PC-9 (cell line): ENCODE measurements at regions of chr19 and their contacts with region 1.

Region 1: GRCh38 chr19:15828429-15829305 is 13.2 kb upstream of the OR10H1 start:
- DNase-seq: peak; percentile 82 to 99
- H3K4me3 ChIP-seq: peak overlapping the region; percentile 64
- H3K27ac ChIP-seq: peak overlapping the region; percentile 99
- H3K4me1 ChIP-seq: peaks cover 46% of the 10 kb centered on the region
- H3K27me3 ChIP-seq: no peaks in the 10 kb centered on the region
- CTCF ChIP-seq: no peak

Region 2: GRCh38 chr19:15640294-15640903 is 188.3 kb before region 1 on chr19 and contains the start of gene CYP4F3:
- CTCF ChIA-PET with region 1: no interaction called
- POLR2A ChIA-PET with region 1: no interaction called
- intact Hi-C with region 1: loop called (anchors 2 kb)
- DNase-seq: peak; percentile 98
- H3K4me3 ChIP-seq: peak within 1 kb of the TSS; percentile 32; the same call in 1 of the 2 replicates
- H3K27ac ChIP-seq: peak within 1 kb of the TSS; percentile 95
- H3K4me1 ChIP-seq: peaks cover 48% of the 10 kb centered on the region
- H3K27me3 ChIP-seq: no peaks in the 10 kb centered on the region
- CTCF ChIP-seq: no peak
- total RNA-seq, gene CYP4F3: 57.6 and 70.7 TPM in 2 replicates

Region 3: DNA sequence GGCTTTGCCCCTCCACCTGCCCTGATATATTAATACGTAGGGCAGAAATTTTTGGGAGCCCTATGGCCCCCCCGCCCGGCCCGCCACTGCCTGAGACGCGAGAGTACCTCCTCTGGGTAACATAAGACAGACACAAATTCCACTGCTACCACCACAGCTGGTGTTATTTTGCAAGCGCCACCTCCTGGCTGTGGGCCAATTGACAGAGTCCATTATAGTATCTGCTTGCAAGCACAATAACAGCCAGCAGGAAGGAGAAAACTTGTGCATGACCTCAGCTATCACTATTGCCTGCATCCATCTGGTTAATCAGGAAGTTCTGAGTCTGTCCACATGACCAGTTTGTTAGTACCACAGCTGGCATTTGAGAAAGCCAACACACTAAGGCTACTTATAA is 126.1 kb before region 1 on chr19:
- CTCF ChIA-PET with region 1: no interaction called
- POLR2A ChIA-PET with region 1: no interaction called
- intact Hi-C with region 1: loop called (anchors 1 kb)
- DNase-seq: peak; percentile 85 to 97
- H3K4me3 ChIP-seq: no peak overlapping the region
- H3K27ac ChIP-seq: no peak overlapping the region; the same call in 1 of the 2 replicates
- H3K4me1 ChIP-seq: peaks cover 19% of the 10 kb centered on the region
- H3K27me3 ChIP-seq: peaks cover 7% of the 10 kb centered on the region; the same call in 1 of the 2 replicates
- CTCF ChIP-seq: 0 out of 2 replicates have a peak, but pooled peaks have one; percentile 28

Region 4: DNA sequence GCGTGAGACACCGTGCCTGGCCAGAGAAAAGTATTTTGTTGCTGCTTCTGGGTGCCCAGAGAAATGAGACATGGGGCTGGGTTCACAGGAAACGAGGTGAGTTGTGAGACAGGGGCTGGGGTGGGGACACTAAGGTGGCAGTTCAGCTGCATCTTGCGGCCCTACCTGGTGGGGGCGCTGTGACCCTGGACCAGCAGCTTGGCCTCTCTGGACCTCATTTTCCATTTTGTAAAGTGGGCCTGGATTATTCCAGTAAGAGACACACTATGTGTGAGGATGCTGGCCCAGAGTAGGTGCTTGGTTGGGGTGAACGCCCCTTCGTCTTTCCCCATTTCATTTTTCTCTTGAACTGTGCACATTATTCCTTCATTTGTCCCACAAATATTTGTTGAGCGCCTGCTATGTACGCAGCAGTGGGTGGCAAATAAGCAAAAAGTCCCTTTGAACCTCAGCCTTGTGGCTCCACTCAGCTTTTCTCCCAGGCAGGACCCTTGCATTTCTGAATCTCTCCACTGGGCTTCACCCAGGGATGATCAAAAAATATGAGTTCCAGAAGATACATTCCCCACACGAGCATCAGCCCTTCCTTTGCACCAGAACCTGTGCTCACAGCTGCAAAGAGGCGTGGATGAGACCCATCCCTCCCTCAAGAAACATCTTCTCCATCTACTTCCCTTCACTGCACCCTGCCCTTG is 13.4 kb after region 1 on chr19:
- CTCF ChIA-PET with region 1: no interaction called
- POLR2A ChIA-PET with region 1: interaction called, 17 read pairs
- intact Hi-C with region 1: loop called (anchors 1 kb)
- DNase-seq: no peak
- H3K4me3 ChIP-seq: no peak overlapping the region
- H3K27ac ChIP-seq: no peak overlapping the region
- H3K4me1 ChIP-seq: peaks cover 11% of the 10 kb centered on the region
- H3K27me3 ChIP-seq: no peaks in the 10 kb centered on the region
- CTCF ChIP-seq: peak; percentile 59

Region 5: GRCh38 chr19:16476401-16476800 is 647.7 kb after region 1 on chr19:
- CTCF ChIA-PET with region 1: interaction called, 13 read pairs
- POLR2A ChIA-PET with region 1: no interaction called
- intact Hi-C with region 1: no loop called
- DNase-seq: no peak
- H3K4me3 ChIP-seq: no peak overlapping the region
- H3K27ac ChIP-seq: no peak overlapping the region
- H3K4me1 ChIP-seq: peaks cover 14% of the 10 kb centered on the region
- H3K27me3 ChIP-seq: no peaks in the 10 kb centered on the region
- CTCF ChIP-seq: no peak